ENCODE measurements at regions of chr15 and their contacts with region 1.

Region 1: GRCh38 chr15:92624401-92624991 is 31.1 kb downstream of the FAM174B start:
- DNase-seq: peak; percentile 50 to 61
- ATAC-seq: peak; percentile 74 to 90 (median 88)
- H3K4me3 ChIP-seq: peak overlapping the region in 3 of 10 donors; percentile 19 to 22 (median 19)
- H3K27ac ChIP-seq: peak overlapping the region in 7 of 10 donors; percentile 34 to 72 (median 53)
- H3K4me1 ChIP-seq: peaks cover 0 to 36% (median 27%) of the 10 kb centered on the region in 9 donors
- H3K27me3 ChIP-seq: no peaks in the 10 kb centered on the region
- CTCF ChIP-seq: no peak

Region 2: GRCh38 chr15:92346063-92346462 is 278.4 kb before region 1 on chr15:
- intact Hi-C with region 1: no loop called
- DNase-seq: no peak
- ATAC-seq: no peak
- H3K4me3 ChIP-seq: no peak overlapping the region
- H3K27ac ChIP-seq: no peak overlapping the region
- H3K4me1 ChIP-seq: peaks cover 0 to 23% (median 7%) of the 10 kb centered on the region in 9 donors
- H3K27me3 ChIP-seq: peaks cover 0 to 22% (median 14%) of the 10 kb centered on the region in 7 donors
- CTCF ChIP-seq: no peak

Region 3: DNA sequence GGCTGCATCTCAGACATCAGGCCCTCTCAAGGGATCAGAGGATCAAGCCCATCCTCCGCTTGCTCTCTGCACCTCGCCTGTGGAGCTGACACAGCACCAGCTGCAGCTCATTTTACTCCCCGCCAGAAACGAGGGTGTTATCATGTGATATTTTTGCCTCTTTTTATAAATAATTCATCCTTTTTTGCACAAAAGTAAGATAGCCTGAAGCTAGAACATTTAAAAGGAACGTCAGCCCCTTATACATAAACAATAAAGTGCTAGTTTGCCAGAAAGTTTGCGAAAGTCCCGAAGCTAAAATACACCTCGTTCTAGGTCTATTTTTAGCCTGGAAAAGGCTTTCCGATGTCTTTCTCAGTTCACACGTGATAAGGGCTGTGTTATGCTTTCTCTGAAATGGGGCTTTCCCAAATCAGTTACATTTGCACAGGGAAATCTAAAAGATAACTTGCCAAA is 40.6 kb after region 1 on chr15:
- intact Hi-C with region 1: loop called in 3 of 10 experiments (anchors 5 to 10 kb)
- DNase-seq: no peak
- ATAC-seq: peak in 7 of 8 donors; percentile 58 to 81 (median 63)
- H3K4me3 ChIP-seq: peak overlapping the region in 6 of 10 donors; percentile 7 to 28 (median 21)
- H3K27ac ChIP-seq: peak overlapping the region in 6 of 10 donors; percentile 23 to 65 (median 49)
- H3K4me1 ChIP-seq: peaks cover 8 to 46% (median 36%) of the 10 kb centered on the region in 9 donors
- H3K27me3 ChIP-seq: no peaks in the 10 kb centered on the region
- CTCF ChIP-seq: no peak

Region 4: GRCh38 chr15:92683232-92683834 is 58.8 kb after region 1 on chr15:
- intact Hi-C with region 1: loop called in 2 of 10 experiments (anchors 5 kb)
- DNase-seq: peak; percentile 28 to 46
- ATAC-seq: peak in 6 of 8 donors; percentile 41 to 82 (median 62)
- H3K4me3 ChIP-seq: no peak overlapping the region
- H3K27ac ChIP-seq: peak overlapping the region in 4 of 10 donors; percentile 2 to 79 (median 18)
- H3K4me1 ChIP-seq: peaks cover 0 to 32% (median 0%) of the 10 kb centered on the region in 9 donors
- H3K27me3 ChIP-seq: no peaks in the 10 kb centered on the region
- CTCF ChIP-seq: peak; percentile 57 to 78 (median 69)